Posterior vena cava (tissue), 2 donors: ENCODE measurements at regions of chr10 and their contacts with region 1.

Region 1: DNA sequence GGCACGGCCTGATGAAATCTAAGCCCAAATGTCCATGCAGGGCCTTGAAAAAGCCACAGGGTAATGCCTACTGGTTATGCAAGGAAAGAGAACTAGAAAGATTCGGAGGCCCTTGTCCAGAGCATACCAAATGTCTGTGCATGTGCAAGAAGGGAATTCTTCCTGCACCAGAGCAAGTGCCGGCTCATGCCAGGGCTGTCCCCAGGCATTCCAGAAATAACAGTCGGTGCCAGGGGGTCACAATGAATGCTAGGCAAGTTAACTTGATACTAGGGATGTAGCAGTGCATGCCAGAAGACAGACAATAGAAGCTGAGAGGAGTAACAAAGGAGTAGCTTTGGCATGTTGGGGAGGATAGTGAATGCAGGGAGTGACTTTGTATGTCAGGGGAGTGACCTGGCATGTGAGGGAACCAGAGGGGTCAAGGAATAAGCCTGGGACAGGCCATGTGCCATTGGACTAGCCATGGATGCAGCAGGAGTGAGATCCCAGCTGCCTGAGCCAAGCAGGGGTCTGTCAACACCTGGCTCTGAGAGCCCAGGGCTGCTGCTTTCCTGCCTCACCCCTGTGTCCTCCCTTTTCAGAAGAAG is 119.5 kb upstream of the UNC5B start:
- DNase-seq: no peak

Region 2: DNA sequence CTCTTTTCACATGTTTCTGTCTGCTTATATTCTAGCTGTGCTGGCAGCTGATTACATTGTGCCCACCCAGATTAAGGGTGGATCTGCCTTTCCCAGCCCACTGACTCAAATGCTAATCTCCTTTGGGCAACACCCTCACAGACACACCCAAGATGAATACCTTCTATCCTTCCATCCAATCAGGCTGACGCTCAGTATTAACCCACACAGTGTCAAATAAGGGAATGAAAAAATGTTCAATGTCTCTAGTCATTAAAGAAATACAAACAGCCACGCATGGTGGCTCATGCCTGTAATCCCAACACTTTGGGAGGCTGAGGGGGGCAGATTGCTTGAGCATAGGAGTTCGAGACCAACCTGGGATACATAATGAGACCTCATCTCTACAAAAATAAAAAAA is 69.0 kb before region 1 on chr10:
- intact Hi-C with region 1: loop called in 1 of 2 experiments (anchors 2 kb)
- DNase-seq: peak; percentile 16

Region 3: DNA sequence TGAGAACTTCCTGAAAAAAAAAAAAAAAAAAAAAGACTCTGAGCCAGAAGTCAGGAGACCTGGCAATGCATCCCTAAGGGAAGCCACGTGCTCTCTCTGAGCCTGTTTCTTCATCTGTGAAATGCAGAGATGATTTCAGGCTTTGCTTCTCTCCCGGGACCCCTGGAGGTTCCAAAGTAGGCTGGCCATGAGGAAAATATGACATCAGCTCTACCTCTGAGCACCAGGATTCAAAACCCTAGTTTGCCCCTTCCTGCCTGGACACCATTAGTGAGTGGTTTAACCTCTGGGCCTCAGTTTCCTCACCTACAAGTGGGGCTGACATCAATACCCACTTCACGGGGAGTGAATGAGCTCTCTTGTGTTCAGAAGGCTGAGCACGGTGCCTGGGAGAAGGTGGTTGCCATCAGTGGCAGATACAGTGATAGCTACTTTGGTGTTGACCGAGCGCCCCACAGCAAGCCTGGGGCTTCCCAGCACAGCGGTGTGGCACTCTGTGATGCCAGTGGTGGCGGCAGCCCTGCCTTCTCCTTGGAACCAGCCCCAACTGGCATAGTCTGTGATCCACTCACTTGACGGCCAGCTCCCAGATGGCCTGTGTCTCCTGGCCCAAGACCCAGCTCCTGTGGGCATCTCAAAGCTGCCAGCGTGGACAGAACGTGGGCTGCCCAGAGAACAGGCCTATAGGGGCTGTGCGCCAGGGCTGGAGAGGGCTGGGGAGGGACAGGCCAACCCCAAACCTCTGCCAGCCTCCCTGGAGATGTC is 33.7 kb before region 1 on chr10:
- intact Hi-C with region 1: loop called in 1 of 2 experiments (anchors 1 kb)
- DNase-seq: no peak